Posterior cingulate gyrus (tissue), 11 donors: ENCODE measurements at regions of chr14 and their contacts with region 1.

Region 1: DNA sequence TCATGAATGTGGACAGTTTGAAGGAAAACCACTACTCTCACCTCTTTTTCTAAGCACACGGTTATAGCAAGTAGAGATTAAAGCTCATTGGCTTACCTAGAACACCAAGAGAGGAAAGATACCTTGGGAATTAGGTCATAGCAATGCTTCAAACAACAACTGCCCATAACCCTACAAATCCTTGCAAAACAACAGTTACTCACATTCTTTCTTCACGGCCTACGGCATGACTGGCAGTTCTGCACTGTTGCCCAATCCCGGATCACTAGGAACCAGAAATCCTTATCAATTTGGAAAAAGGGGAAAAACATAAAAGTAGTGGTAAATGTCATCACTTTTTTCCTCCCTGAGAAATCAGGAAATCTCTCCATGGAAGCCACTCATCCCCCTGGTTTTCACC is 9.6 kb upstream of the ISM2 start:
- DNase-seq: no peak

Region 2: DNA sequence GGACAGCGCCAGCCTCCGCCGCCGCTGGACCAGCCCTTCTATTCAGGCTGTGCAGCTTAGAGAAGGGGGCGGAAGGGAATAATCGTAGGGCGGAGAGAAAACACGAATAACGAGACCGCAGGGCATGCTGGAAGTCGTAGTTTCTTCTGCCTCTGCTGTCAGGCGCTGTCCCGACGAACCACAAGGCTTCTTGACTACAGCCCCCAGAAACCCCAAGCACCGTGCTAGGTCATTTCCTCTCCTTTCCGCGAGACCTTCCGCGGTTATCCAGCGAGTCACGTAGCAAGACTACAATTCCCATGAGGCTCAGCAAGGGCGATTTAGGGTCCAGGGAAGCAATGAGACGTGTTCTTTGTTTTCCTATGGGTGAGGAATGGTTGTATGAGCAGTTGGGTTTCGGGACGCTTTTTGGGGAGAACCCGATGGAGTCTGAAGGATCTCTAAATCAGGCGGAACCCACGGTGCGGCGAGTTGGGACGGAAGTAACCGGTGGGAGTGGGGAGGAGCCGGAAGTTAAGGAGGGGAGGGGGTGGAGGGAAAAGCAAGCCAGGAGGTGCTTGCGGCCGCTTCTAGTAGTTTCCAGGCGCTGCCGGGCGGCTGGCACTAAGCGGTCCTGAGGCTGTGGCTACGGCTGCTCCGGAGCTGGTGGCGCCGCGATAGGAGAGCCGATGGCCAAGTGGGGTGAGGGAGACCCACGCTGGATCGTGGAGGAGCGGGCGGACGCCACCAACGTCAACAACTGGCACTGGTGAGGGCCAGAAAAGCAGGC is 50.5 kb before region 1 on chr14 and contains the starts of genes AHSA1 and VIPAS39:
- intact Hi-C with region 1: no loop called
- DNase-seq: peak; percentile 92 to 99 (median 95)

Region 3: DNA sequence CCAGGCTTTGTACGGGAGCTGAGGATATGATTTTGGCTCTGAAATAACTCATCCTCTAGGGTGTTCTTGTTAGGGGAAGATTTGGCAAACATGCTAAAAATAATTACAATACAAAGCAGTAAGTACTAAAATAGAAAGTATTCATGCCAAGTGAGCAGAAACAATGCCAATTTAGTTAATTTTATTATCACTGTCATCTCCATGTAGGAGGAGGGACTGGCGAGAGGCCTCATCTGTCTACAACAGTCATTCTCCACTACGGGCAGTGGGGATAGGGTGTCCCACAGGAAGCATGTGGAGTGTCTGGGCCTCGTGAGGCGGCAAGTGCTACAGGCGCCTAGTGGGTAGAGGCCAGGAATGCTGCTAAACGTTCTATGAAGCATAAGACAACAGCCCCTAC is 12.9 kb before region 1 on chr14:
- intact Hi-C with region 1: no loop called
- DNase-seq: peak in 3 of 10 donors; percentile 49 to 82 (median 67)

Region 4: GRCh38 chr14:77580964-77581505 is 72.8 kb after region 1 on chr14:
- intact Hi-C with region 1: loop called (anchors 2 kb)
- DNase-seq: no peak